ENCODE measurements at regions of chr10 and their contacts with region 1.

Region 1: DNA sequence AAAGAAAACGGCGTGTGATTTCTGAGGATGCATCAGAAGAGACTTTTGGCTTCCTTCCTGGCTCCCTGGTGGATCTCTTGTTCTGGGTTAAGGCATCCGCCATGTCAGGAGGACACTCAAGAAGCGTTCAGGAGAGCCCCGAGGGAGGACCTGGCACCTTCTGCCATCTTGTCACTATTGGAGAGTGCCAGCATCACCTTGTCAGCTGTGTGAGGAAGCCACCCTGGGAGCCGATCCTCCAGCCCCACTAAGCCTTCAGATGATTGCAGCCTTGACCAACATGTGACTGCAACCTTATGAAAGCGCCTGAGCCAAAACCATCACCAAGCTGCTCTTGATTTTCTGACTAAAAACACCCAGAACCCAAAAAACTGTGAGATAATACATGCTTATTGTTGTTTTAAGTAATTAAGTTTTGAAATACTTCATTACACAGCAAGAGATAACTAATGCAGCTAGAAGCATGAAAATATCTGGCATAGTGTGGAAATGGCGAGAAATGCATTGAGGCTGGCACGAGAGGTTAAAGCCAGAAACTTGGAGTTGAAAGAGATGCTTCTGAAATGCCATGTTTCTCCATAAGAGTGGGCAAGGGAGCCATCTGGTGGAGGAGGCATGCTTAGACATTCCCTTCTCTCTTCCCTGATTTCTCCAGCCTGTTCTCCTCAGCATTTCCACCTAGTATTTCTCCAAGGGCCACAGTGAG is 5.4 kb upstream of the ZFYVE27 start:
- DNase-seq: peak in 1 of 2 donors; percentile 79
- ATAC-seq: peak in 7 of 8 donors; percentile 62 to 77 (median 74)
- H3K4me3 ChIP-seq: no peak overlapping the region
- H3K27ac ChIP-seq: no peak overlapping the region
- H3K4me1 ChIP-seq: peaks cover 0 to 10% (median 1%) of the 10 kb centered on the region in 9 donors
- H3K27me3 ChIP-seq: no peaks in the 10 kb centered on the region
- CTCF ChIP-seq: peak; percentile 52 to 94 (median 84)

Region 2: DNA sequence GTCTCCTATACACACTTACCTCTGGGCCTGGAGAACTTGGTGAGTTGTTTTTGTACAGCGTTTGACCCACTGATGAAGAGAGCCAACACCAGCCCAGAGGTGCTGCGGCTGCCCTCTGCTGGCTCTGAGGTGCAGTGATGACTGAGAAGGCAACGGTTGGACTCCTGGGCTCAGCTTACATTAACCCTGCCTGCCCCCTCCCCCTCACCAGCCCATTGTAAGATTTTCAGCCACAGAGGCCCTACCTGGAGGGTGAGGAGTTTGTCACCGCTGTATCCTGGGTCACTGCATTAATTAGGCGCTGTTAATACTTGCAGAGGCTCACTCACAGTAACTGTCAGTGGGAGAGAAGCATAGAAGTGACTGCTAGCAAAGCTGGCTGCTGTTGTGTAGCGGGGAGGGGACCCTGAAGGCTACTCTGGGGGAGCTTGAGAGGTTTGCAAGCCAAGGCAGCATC is 177.9 kb before region 1 on chr10:
- intact Hi-C with region 1: no loop called
- DNase-seq: peak; percentile 65 to 71
- ATAC-seq: peak; percentile 86 to 93 (median 88)
- H3K4me3 ChIP-seq: no peak overlapping the region
- H3K27ac ChIP-seq: no peak overlapping the region
- H3K4me1 ChIP-seq: peaks cover 8 to 41% (median 28%) of the 10 kb centered on the region in 9 donors
- H3K27me3 ChIP-seq: no peaks in the 10 kb centered on the region
- CTCF ChIP-seq: peak; percentile 69 to 92 (median 83)

Region 3: DNA sequence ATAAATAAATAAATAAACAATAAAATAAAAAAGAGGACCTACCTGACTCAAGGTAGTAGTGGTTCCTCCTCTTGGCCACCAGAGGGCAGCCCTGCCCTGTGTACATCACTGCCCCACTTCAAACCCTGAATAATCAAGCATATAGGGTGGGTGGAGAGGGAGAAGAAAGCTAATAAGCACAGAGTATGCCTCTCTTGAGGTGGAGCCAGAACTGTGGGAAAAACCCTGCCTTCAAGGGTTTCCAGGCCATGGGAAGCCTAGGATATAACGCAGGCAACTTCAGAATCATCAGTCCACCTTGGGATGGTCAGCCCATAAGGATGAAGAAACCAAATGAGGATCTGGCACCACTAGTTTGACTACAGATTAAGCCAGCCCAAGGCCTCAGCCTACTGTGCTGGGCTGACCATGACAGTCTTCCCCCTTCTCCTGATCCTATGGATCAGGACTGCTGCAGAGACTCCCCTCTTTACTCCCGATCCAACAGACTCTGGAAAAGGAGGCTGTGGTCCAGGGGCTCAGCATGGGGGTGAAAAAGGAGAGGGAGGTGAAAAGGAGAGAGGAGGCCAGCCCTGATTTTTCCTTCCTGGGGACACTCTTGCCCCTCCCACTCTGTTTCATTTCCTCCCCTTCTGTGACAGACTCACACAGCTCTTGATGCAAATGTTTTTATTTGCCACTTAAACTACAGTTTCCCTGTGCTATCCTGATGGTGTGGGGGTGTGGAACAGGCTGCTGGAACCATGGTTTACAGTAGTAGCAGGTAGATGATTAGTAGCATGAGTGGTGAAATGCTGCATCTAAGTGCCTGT is 54.5 kb before region 1 on chr10:
- intact Hi-C with region 1: loop called in 9 of 10 experiments (anchors 1 to 5 kb)
- DNase-seq: no peak
- ATAC-seq: peak in 7 of 8 donors; percentile 61 to 78 (median 68)
- H3K4me3 ChIP-seq: no peak overlapping the region
- H3K27ac ChIP-seq: no peak overlapping the region
- H3K4me1 ChIP-seq: peaks cover 0 to 21% (median 0%) of the 10 kb centered on the region in 9 donors
- H3K27me3 ChIP-seq: no peaks in the 10 kb centered on the region
- CTCF ChIP-seq: peak; percentile 80 to 94 (median 89)

Region 4: GRCh38 chr10:97686962-97687784 is 44.3 kb before region 1 on chr10 and contains the start of gene AVPI1:
- intact Hi-C with region 1: loop called in 4 of 10 experiments (anchors 2 to 5 kb)
- DNase-seq: peak; percentile 96 to 98
- ATAC-seq: peak; percentile 93 to 97 (median 96)
- H3K4me3 ChIP-seq: peak within 1 kb of the TSS; percentile 50 to 89 (median 74)
- H3K27ac ChIP-seq: peak within 1 kb of the TSS; percentile 64 to 93 (median 89)
- H3K4me1 ChIP-seq: peaks cover 10 to 64% (median 42%) of the 10 kb centered on the region in 9 donors
- H3K27me3 ChIP-seq: no peaks in the 10 kb centered on the region
- CTCF ChIP-seq: no peak
- total RNA-seq, gene AVPI1: 6.5 to 12.9 (median 9.1) TPM

Region 5: DNA sequence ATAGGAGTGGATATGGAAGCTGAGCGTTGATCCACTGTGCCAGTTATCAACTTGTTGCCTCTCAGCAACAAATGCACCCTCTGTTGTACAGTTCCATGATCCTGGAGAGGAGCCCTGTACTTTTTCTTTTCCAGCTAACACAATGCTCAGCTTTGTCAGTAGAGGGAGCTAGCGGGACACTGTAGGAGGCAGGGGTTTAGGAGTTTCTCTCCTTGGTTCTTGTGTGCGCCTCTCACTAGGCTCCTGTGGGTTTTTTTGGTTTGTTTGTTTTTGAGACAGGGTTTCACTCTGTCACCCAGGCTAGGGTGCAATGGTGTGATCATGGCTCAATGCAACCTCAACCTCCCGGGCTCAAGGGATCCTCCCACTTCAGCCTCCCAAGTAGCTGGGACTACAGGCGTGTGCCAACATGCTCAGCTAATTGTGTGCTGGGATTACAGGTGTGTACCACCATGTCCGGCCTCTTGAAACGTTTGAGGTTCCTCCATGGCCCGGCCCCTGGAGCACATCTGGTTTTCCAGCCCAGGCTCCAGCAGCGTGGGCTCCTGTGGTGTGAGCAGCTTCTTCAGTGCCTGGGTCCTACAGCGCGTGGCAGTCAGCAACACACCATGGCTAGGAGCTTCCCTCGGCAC is 29.9 kb before region 1 on chr10:
- intact Hi-C with region 1: loop called in 3 of 10 experiments (anchors 1 to 5 kb)
- DNase-seq: peak in 1 of 2 donors; percentile 45
- ATAC-seq: peak; percentile 77 to 93 (median 90)
- H3K4me3 ChIP-seq: no peak overlapping the region
- H3K27ac ChIP-seq: no peak overlapping the region
- H3K4me1 ChIP-seq: peaks cover 0 to 7% (median 0%) of the 10 kb centered on the region in 9 donors
- H3K27me3 ChIP-seq: peaks cover 0 to 4% (median 0%) of the 10 kb centered on the region in 7 donors
- CTCF ChIP-seq: peak; percentile 59 to 90 (median 84)

Region 6: DNA sequence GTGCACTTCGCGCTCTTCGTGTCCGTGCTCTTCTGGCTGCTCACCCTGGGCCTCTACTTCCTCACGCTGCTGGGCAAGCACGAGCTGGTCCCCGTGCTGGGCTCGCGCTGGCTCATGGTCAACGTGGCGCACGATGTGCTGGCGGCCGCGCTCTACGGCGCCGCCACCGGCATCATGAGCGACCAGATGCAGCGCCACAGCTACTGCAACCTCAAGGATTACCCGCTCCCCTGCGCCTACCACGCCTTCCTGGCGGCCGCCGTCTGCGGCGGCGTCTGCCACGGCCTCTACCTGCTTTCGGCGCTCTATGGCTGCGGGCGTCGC is 17.5 kb before region 1 on chr10:
- intact Hi-C with region 1: loop called in 7 of 10 experiments (anchors 1 to 2 kb)
- DNase-seq: peak; percentile 70 to 76
- ATAC-seq: peak; percentile 63 to 86 (median 70)
- H3K4me3 ChIP-seq: peak overlapping the region; percentile 57 to 80 (median 70)
- H3K27ac ChIP-seq: peak overlapping the region; percentile 87 to 98 (median 94)
- H3K4me1 ChIP-seq: peaks cover 6 to 69% (median 44%) of the 10 kb centered on the region in 9 donors
- H3K27me3 ChIP-seq: no peaks in the 10 kb centered on the region
- CTCF ChIP-seq: peak in 4 of 9 donors; percentile 24 to 41 (median 34)